MCF 10A (cell line): ENCODE measurements at regions of chr1 and their contacts with region 1.

Region 1: GRCh38 chr1:153122831-153123421 is 9.6 kb upstream of the SPRR2F start:
- DNase-seq: peak; percentile 95
- H3K4me3 Mint-ChIP-seq: peak overlapping the region; percentile 24
- H3K27ac Mint-ChIP-seq: peak overlapping the region; percentile 84
- H3K4me1 Mint-ChIP-seq: peaks cover 12% of the 10 kb centered on the region
- H3K27me3 Mint-ChIP-seq: no peaks in the 10 kb centered on the region
- CTCF ChIP-seq: no peak

Region 2: DNA sequence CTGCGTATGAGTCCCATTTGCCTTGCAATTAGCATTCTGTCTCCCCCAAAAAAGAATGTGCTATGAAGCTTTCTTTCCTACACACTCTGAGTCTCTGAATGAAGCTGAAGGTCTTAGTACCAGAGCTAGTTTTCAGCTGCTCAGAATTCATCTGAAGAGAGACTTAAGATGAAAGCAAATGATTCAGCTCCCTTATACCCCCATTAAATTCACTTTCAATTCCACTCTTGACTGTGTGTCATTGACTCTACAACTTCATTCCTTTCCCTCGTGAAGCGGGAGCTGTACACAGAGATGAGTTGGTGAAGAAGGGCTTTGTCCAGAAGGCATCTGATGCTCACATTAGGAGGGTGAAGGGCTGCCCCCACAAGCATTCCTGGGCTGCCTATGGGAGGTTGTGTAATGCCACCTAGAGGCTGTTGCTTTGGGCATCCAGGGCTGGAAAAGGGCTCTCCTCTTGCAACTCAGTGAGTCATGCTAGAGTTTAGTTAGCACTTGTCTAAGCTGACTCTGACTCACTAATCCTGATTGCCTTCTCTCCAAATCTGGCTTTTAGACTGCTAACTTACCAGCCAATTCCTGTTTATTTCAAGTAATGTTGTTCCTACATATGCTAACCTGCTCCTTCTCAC is 90.1 kb before region 1 on chr1:
- CTCF ChIA-PET with region 1: no interaction called
- POLR2A ChIA-PET with region 1: no interaction called
- intact Hi-C with region 1: no loop called
- DNase-seq: peak; percentile 97
- H3K4me3 Mint-ChIP-seq: no peak overlapping the region
- H3K27ac Mint-ChIP-seq: peak overlapping the region; percentile 25
- H3K4me1 Mint-ChIP-seq: peaks cover 12% of the 10 kb centered on the region
- H3K27me3 Mint-ChIP-seq: no peaks in the 10 kb centered on the region
- CTCF ChIP-seq: peak; percentile 68

Region 3: GRCh38 chr1:153133267-153133666 is 10.3 kb after region 1 on chr1:
- CTCF ChIA-PET with region 1: interaction called, 3 read pairs
- POLR2A ChIA-PET with region 1: interaction called, 16 read pairs
- intact Hi-C with region 1: no loop called
- DNase-seq: no peak
- H3K4me3 Mint-ChIP-seq: no peak overlapping the region
- H3K27ac Mint-ChIP-seq: no peak overlapping the region
- H3K4me1 Mint-ChIP-seq: peaks cover 18% of the 10 kb centered on the region
- H3K27me3 Mint-ChIP-seq: no peaks in the 10 kb centered on the region
- CTCF ChIP-seq: no peak